Gastrocnemius medialis (tissue), 4 donors: ENCODE measurements at regions of chr3 and their contacts with region 1.

Region 1: GRCh38 chr3:152574461-152575079 is 260.4 kb upstream of the P2RY1 start:
- DNase-seq: peak; percentile 30 to 37
- ATAC-seq: peak in 1 of 2 donors; percentile 62
- H3K4me3 ChIP-seq: no peak overlapping the region
- H3K27ac ChIP-seq: no peak overlapping the region
- H3K4me1 ChIP-seq: no peaks in the 10 kb centered on the region
- H3K27me3 ChIP-seq: no peaks in the 10 kb centered on the region
- CTCF ChIP-seq: peak; percentile 8 to 54 (median 50)
- POLR2A ChIP-seq: no peak

Region 2: GRCh38 chr3:152471814-152472671 is 102.5 kb before region 1 on chr3:
- in situ Hi-C with region 1: loop called in 2 of 4 experiments (anchors 10 kb)
- intact Hi-C with region 1: loop called (anchors 1 kb)
- DNase-seq: peak; percentile 32 to 52
- ATAC-seq: peak; percentile 62 to 63
- H3K4me3 ChIP-seq: peak overlapping the region in 2 of 4 donors; percentile 13 to 31
- H3K27ac ChIP-seq: peak overlapping the region; percentile 34 to 62 (median 53)
- H3K4me1 ChIP-seq: peaks cover 13% of the 10 kb centered on the region in 2 donors
- H3K27me3 ChIP-seq: no peaks in the 10 kb centered on the region
- CTCF ChIP-seq: peak; percentile 72 to 78 (median 76)
- POLR2A ChIP-seq: no peak

Region 3: DNA sequence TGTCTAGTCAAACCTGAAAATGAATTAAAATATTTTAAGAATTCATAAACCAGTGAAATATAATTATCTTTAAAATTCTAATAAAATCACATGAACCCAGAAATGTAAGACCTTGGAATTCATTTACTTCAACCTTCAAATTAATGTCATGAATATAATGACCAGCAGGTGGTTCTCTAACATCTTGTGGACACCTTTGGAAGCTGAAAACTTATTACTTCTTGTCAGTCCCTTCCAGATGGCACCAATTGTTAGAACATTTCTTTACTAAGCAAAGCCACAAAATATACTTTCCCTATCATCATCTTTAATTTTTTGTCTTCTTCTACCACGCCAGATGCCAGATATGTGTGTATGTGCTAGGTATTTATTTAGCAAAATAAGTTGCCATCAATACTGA is 65.9 kb before region 1 on chr3:
- in situ Hi-C with region 1: loop called in 1 of 4 experiments (anchors 5 kb)
- intact Hi-C with region 1: loop called (anchors 5 kb)
- DNase-seq: no peak
- ATAC-seq: peak in 1 of 2 donors; percentile 32
- H3K4me3 ChIP-seq: no peak overlapping the region
- H3K27ac ChIP-seq: no peak overlapping the region
- H3K4me1 ChIP-seq: no peaks in the 10 kb centered on the region
- H3K27me3 ChIP-seq: no peaks in the 10 kb centered on the region
- CTCF ChIP-seq: peak in 3 of 5 experiments; percentile 21 to 48 (median 30)
- POLR2A ChIP-seq: no peak

Region 4: DNA sequence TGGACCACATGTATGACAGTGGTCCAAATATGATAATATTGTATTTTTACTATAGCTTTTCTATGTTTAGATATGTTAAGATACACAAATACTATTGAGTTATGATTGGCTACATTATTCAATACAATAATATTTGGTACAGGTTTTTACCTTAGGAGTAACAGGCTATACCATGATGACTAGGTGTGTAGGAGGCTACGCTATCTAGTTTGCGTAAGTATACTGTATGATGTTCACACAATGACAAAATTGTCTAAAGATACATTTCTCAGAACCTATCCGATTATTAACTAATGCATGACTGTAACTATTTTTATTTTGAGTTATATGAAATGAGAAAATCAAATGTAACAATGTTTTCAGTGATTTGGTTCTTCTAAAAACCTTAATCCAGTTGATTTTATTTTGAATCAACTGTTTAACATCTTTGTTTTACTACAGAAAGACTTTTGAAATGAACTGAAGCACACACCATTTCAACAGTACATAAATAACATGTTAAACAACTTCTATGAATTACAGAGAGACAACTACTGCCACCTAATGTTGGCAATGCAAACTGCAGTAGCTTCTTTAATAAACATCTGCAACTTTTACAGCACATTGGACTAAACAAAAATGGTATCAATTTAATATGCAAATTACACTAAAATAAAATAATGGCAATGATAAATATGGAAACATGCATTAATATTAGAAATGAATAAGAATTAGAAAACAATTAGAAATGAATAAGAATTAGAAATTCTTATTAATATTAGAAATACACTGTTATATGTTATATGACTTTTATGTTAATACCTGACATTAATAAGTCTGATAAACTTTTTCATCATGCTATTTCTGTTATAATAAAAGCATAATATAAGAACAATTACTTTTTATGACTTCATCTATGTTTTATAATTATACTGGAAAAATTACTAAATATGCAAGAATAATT is 50.1 kb before region 1 on chr3:
- in situ Hi-C with region 1: no loop called
- intact Hi-C with region 1: loop called (anchors 5 kb)
- DNase-seq: no peak
- ATAC-seq: peak; percentile 31 to 79
- H3K4me3 ChIP-seq: no peak overlapping the region
- H3K27ac ChIP-seq: no peak overlapping the region
- H3K4me1 ChIP-seq: no peaks in the 10 kb centered on the region
- H3K27me3 ChIP-seq: no peaks in the 10 kb centered on the region
- CTCF ChIP-seq: peak; percentile 64 to 89 (median 79)
- POLR2A ChIP-seq: no peak

Region 5: DNA sequence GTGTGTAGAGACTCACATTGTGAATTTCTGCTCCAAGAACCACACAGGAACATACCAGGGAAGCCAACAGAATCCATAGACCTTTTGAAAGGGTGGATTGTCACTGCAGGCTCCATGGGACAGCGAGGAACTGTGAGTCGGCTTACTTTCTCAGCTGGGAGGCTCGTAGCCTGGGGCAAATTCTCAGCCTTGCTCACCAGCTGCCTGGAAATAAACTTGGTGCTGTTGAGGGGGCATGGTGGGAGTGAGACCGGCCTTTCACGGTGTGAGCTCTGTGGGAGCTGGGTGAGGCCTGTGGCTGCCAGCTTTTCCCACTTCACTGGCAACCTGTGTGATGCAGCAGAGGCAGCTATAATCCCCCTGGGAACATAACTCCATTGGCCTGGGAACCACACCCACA is 113.7 kb after region 1 on chr3:
- in situ Hi-C with region 1: no loop called
- intact Hi-C with region 1: no loop called
- DNase-seq: no peak
- ATAC-seq: no peak
- H3K4me3 ChIP-seq: no peak overlapping the region
- H3K27ac ChIP-seq: no peak overlapping the region
- H3K4me1 ChIP-seq: no peaks in the 10 kb centered on the region
- H3K27me3 ChIP-seq: no peaks in the 10 kb centered on the region
- CTCF ChIP-seq: no peak
- POLR2A ChIP-seq: no peak